ENCODE measurements at regions of chr22 and their contacts with region 1.

Region 1: GRCh38 chr22:45096256-45096907 is 67.3 kb upstream of the NUP50 start:
- DNase-seq: no peak
- H3K4me3 ChIP-seq: no peak overlapping the region
- H3K27ac ChIP-seq: no peak overlapping the region
- H3K27me3 ChIP-seq: peaks cover 35% of the 10 kb centered on the region
- CTCF ChIP-seq: peak; percentile 98

Region 2: GRCh38 chr22:44648818-44649565 is 447.4 kb before region 1 on chr22:
- CTCF ChIA-PET with region 1: no interaction called
- POLR2A ChIA-PET with region 1: no interaction called
- DNase-seq: peak; percentile 90
- H3K4me3 ChIP-seq: peak overlapping the region; percentile 23; the same call in 1 of the 2 replicates
- H3K27ac ChIP-seq: peak overlapping the region; percentile 98
- H3K27me3 ChIP-seq: no peaks in the 10 kb centered on the region
- CTCF ChIP-seq: no peak

Region 3: GRCh38 chr22:44819971-44820631 is 276.3 kb before region 1 on chr22:
- CTCF ChIA-PET with region 1: interaction called, 22 read pairs
- POLR2A ChIA-PET with region 1: no interaction called
- DNase-seq: no peak
- H3K4me3 ChIP-seq: no peak overlapping the region
- H3K27ac ChIP-seq: no peak overlapping the region
- H3K27me3 ChIP-seq: peaks cover 28% of the 10 kb centered on the region
- CTCF ChIP-seq: no peak